ENCODE measurements at regions of chrX and their contacts with region 1.

Region 1: DNA sequence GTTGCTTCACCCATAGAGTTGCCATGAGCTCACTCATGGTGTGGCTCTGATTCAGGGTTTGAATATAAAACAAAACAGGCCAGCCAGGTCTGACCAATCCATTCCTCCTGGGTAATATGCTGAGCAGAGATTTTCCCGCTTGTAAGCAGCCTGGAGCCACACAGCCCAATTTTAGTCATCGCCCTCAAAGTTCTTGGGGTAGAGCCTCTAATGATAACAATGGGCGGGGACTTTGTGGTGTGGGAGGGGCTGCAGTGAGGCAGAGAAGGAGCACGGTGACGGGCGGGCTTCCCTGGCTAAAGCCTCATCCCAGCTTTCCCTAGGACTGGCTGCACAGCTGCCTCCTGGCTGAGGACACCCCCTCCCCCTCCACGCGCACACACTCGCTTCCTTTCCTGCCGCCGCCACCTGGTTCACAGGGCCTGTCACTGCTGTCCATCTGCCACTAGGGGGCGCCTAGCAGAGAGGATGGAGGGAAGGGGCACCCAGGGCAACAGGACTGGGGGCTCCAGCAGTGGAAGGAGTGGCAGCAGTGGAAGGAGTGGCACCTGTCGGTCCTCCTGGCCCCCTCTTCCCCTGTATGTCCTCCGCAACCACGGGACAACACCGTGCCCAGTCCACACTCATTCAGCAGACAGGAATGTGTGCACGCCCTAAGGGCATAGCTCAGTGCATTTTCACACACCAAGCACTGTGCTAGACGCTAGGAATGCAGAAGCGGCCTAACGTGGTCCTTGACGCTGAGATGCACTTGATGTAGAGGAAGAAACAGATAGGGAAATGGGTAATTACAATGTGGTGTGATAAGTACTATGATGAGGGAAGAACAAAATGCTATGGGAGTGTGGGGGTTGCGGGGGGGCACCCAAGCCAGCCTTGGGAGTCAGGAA is 26.8 kb downstream of the PRPS1 start:
- DNase-seq: peak; percentile 40 to 75 (median 56)
- ATAC-seq: peak; percentile 47 to 88 (median 79)
- H3K4me3 ChIP-seq: peak overlapping the region in 1 of 12 donors; percentile 25
- H3K27ac ChIP-seq: peak overlapping the region in 3 of 12 donors; percentile 11 to 43 (median 16)
- H3K4me1 ChIP-seq: peaks cover 0 to 10% (median 7%) of the 10 kb centered on the region in 12 donors
- H3K27me3 ChIP-seq: peaks cover 0 to 8% (median 0%) of the 10 kb centered on the region in 9 donors
- CTCF ChIP-seq: peak; percentile 51 to 79 (median 64)
- POLR2A ChIP-seq: no peak

Region 2: GRCh38 chrX:107348051-107348450 is 307.1 kb before region 1 on chrX:
- intact Hi-C with region 1: no loop called
- DNase-seq: no peak
- ATAC-seq: no peak
- H3K4me3 ChIP-seq: no peak overlapping the region
- H3K27ac ChIP-seq: no peak overlapping the region
- H3K4me1 ChIP-seq: no peaks in the 10 kb centered on the region
- H3K27me3 ChIP-seq: peaks cover 0 to 30% (median 0%) of the 10 kb centered on the region in 9 donors
- CTCF ChIP-seq: no peak
- POLR2A ChIP-seq: no peak

Region 3: GRCh38 chrX:107537815-107538214 is 117.3 kb before region 1 on chrX:
- intact Hi-C with region 1: loop called in 1 of 10 experiments (anchors 5 kb)
- DNase-seq: peak in 1 of 5 donors; percentile 9
- ATAC-seq: no peak
- H3K4me3 ChIP-seq: no peak overlapping the region
- H3K27ac ChIP-seq: no peak overlapping the region
- H3K4me1 ChIP-seq: no peaks in the 10 kb centered on the region
- H3K27me3 ChIP-seq: peaks cover 0 to 12% (median 0%) of the 10 kb centered on the region in 9 donors
- CTCF ChIP-seq: peak in 11 of 12 donors; percentile 16 to 46 (median 29)
- POLR2A ChIP-seq: no peak

Region 4: GRCh38 chrX:107741404-107741790 is 86.3 kb after region 1 on chrX:
- intact Hi-C with region 1: no loop called
- DNase-seq: peak in 1 of 5 donors; percentile 19
- ATAC-seq: no peak
- H3K4me3 ChIP-seq: peak overlapping the region in 2 of 12 donors; percentile 26 to 34
- H3K27ac ChIP-seq: peak overlapping the region; percentile 68 to 97 (median 90)
- H3K4me1 ChIP-seq: peaks cover 7 to 82% (median 45%) of the 10 kb centered on the region in 12 donors
- H3K27me3 ChIP-seq: peaks cover 0 to 15% (median 0%) of the 10 kb centered on the region in 9 donors
- CTCF ChIP-seq: no peak
- POLR2A ChIP-seq: no peak